ENCODE measurements at regions of chr7 and their contacts with region 1.

Region 1: GRCh38 chr7:111735661-111736551 is 173.6 kb upstream of the IMMP2L start:
- DNase-seq: peak in 1 of 2 donors; percentile 78
- ATAC-seq: peak; percentile 54 to 66 (median 57)
- H3K4me3 ChIP-seq: no peak overlapping the region
- H3K4me3 Mint-ChIP-seq: no peak overlapping the region
- H3K27ac ChIP-seq: no peak overlapping the region
- H3K27ac Mint-ChIP-seq: no peak overlapping the region
- H3K4me1 ChIP-seq: no peaks in the 10 kb centered on the region
- H3K4me1 Mint-ChIP-seq: no peaks in the 10 kb centered on the region
- H3K27me3 ChIP-seq: no peaks in the 10 kb centered on the region
- H3K27me3 Mint-ChIP-seq: no peaks in the 10 kb centered on the region
- CTCF ChIP-seq: peak; percentile 96

Region 2: GRCh38 chr7:111089822-111090426 is 646.0 kb before region 1 on chr7:
- intact Hi-C with region 1: loop called (anchors 2 kb)
- DNase-seq: peak in 1 of 2 donors; percentile 73
- ATAC-seq: peak in 2 of 3 donors; percentile 37 to 40
- H3K4me3 ChIP-seq: no peak overlapping the region
- H3K4me3 Mint-ChIP-seq: no peak overlapping the region
- H3K27ac ChIP-seq: no peak overlapping the region
- H3K27ac Mint-ChIP-seq: no peak overlapping the region
- H3K4me1 ChIP-seq: no peaks in the 10 kb centered on the region
- H3K4me1 Mint-ChIP-seq: peaks cover 0 to under 1% of the 10 kb centered on the region in 2 donors
- H3K27me3 ChIP-seq: no peaks in the 10 kb centered on the region
- H3K27me3 Mint-ChIP-seq: no peaks in the 10 kb centered on the region
- CTCF ChIP-seq: peak; percentile 62

Region 3: DNA sequence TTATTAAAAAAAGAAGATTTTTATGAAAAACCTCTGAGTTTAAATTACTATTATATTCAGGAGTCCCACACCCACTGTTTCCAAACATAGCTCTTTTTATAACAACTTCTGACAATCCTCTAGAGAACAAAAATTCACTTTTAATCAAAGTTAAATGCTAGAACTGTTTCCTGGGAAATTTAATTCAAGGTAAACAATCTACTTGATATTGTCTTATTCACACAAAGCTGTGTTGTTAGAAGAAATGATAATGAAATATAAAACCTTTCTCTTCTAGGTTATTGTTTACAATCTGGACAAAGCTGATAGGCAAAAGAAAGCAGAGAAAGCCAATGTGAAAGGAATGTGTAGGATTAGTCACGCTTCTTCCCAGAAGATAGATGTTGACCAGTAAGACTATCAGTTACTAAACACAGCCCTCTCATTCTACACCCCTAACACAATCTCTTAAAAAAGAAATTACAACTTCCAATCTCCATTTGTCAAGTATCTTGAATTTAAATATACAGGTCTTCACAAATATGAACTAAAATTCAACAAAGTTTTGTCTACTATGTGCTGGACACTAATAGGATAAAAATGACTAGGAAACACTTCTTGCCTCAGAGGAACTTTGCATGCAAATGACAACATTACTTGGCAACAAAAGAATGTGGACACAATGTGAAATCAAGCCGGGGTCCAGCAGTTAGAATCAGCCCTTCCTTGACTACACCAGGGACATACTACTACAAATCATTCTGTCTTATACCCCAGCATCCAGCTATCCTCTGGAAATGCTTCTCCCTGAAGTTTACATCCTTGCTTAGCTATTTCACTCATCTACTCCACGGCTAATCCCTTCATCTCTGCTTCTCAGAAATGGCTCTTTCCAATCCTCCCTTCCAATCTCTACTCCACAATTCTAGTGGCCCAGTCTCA is 297.3 kb before region 1 on chr7:
- intact Hi-C with region 1: no loop called
- DNase-seq: no peak
- ATAC-seq: no peak
- H3K4me3 ChIP-seq: no peak overlapping the region
- H3K4me3 Mint-ChIP-seq: no peak overlapping the region
- H3K27ac ChIP-seq: no peak overlapping the region
- H3K27ac Mint-ChIP-seq: no peak overlapping the region
- H3K4me1 ChIP-seq: no peaks in the 10 kb centered on the region
- H3K4me1 Mint-ChIP-seq: no peaks in the 10 kb centered on the region
- H3K27me3 ChIP-seq: no peaks in the 10 kb centered on the region
- H3K27me3 Mint-ChIP-seq: no peaks in the 10 kb centered on the region
- CTCF ChIP-seq: no peak

Measured in natural killer cell (primary cell).